ENCODE measurements at regions of chr15 and their contacts with region 1.

Region 1: GRCh38 chr15:90886041-90886614 is 1.8 kb downstream of the FES start:
- DNase-seq: peak; percentile 87
- ATAC-seq: peak; percentile 67
- H3K4me3 ChIP-seq: peak overlapping the region in 3 of 5 experiments; percentile 16 to 61 (median 51)
- H3K4me3 Mint-ChIP-seq: peak overlapping the region; percentile 80
- H3K27ac ChIP-seq: no peak overlapping the region
- H3K27ac Mint-ChIP-seq: peak overlapping the region; percentile 88
- H3K4me1 ChIP-seq: peaks cover 25 to 32% of the 10 kb centered on the region in 2 donors
- H3K4me1 Mint-ChIP-seq: peaks cover 22% of the 10 kb centered on the region
- H3K27me3 ChIP-seq: no peaks in the 10 kb centered on the region
- H3K27me3 Mint-ChIP-seq: no peaks in the 10 kb centered on the region
- CTCF ChIP-seq: peak; percentile 99

Region 2: GRCh38 chr15:89912674-89913396 is 973.3 kb before region 1 on chr15 and contains the start of gene ARPIN:
- CTCF ChIA-PET with region 1: no interaction called
- POLR2A ChIA-PET with region 1: no interaction called
- intact Hi-C with region 1: no loop called
- DNase-seq: peak; percentile 32
- ATAC-seq: no peak
- H3K4me3 ChIP-seq: peak within 1 kb of the TSS in 4 of 5 experiments; percentile 13 to 63 (median 49)
- H3K4me3 Mint-ChIP-seq: peak within 1 kb of the TSS; percentile 71
- H3K27ac ChIP-seq: no peak within 1 kb of the TSS
- H3K27ac Mint-ChIP-seq: no peak within 1 kb of the TSS
- H3K4me1 ChIP-seq: peaks cover 12 to 13% of the 10 kb centered on the region in 2 donors
- H3K4me1 Mint-ChIP-seq: peaks cover 16% of the 10 kb centered on the region
- H3K27me3 ChIP-seq: peaks cover 0 to 19% (median 17%) of the 10 kb centered on the region in 4 experiments
- H3K27me3 Mint-ChIP-seq: peaks cover 46% of the 10 kb centered on the region
- CTCF ChIP-seq: no peak
- total RNA-seq, gene ARPIN: 0.10 TPM in 1 of 2 replicates, not detected in the other

Region 3: DNA sequence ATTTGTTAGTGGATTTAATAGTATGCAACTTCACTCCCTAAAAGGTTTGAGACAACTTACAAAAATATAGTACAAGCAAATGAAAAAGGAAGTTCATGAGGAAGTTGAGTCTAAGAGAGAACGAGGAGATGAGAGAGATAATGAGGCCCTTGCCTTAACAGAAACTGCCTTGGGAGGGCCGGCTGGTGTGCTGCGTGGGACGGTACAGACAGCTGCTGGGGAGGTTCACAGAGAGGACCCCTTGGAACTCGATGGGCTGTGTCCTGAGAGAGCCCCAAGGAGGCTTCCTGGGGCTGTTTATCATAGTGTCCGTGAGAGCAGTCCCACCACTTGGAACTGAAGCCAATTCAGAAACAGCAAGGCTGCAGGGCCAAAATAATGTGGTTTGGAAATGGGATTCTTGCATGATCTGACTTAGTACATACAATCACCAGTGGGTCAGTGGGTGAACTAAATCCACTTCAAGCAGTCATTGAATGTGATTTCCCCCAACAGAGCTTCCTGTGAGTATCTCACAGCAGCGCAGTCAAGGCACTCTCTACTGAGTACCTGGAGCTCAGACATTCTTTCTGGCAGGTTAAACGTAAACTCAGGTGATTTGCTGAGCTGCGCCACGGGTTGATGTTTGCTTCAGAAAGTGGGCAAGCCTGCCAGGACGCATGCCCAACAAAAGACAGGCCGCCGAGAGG is 265.6 kb before region 1 on chr15:
- CTCF ChIA-PET with region 1: interaction called, 17 read pairs
- POLR2A ChIA-PET with region 1: no interaction called
- intact Hi-C with region 1: no loop called
- DNase-seq: peak; percentile 58
- ATAC-seq: peak; percentile 77
- H3K4me3 ChIP-seq: peak overlapping the region in 1 of 5 experiments; percentile 12
- H3K4me3 Mint-ChIP-seq: peak overlapping the region; percentile 8
- H3K27ac ChIP-seq: peak overlapping the region; percentile 39 to 64
- H3K27ac Mint-ChIP-seq: peak overlapping the region; percentile 80
- H3K4me1 ChIP-seq: peaks cover 15 to 19% of the 10 kb centered on the region in 2 donors
- H3K4me1 Mint-ChIP-seq: peaks cover 17% of the 10 kb centered on the region
- H3K27me3 ChIP-seq: no peaks in the 10 kb centered on the region
- H3K27me3 Mint-ChIP-seq: no peaks in the 10 kb centered on the region
- CTCF ChIP-seq: no peak

Region 4: DNA sequence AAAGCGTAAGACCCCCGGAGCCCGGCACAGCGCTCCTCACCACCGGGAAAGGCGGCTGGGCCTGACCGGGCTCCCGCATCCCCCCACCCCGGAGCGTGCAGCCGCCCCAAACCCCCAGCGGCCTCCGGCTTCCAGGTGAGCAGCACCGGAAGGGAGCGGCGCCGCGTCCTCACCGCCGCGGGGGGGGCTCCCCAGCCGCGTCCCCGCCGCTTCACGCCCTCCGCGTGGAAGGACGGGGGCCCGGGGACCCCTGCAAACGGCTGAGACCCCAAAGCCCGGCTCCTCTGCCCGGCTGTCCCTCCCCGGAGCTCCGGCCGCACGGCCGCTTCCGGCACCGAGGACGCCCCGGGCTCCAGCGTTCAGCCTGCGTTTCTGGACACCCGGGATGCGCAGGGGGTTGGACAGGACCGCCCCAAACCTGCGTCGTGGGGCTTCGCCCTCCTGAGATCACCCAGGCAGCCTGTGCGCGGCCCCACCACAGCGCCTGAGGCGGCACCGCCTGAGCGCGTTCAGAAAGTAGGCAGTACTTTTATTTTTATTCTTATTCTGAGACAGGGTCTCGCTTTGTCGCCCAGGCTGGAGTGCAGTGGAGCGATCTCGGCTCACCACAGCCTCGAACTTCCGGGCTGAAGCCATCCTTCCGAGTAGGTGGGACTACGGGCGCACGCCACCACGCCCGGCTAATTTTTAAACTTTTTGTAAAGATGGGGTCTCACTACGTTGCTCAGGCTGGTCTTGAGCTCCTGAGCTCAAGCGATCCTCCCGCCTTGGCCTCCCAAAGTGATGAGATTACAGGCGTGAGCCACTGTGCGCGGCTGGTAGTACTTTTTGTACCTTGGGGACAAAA is 220.6 kb before region 1 on chr15:
- CTCF ChIA-PET with region 1: interaction called, 11 read pairs
- POLR2A ChIA-PET with region 1: no interaction called
- intact Hi-C with region 1: loop called (anchors 5 kb)
- DNase-seq: peak; percentile 83
- ATAC-seq: peak; percentile 73
- H3K4me3 ChIP-seq: peak overlapping the region in 4 of 5 experiments; percentile 50 to 82 (median 62)
- H3K4me3 Mint-ChIP-seq: peak overlapping the region; percentile 89
- H3K27ac ChIP-seq: peak overlapping the region; percentile 20 to 57
- H3K27ac Mint-ChIP-seq: peak overlapping the region; percentile 78
- H3K4me1 ChIP-seq: peaks cover 54 to 65% of the 10 kb centered on the region in 2 donors
- H3K4me1 Mint-ChIP-seq: peaks cover 56% of the 10 kb centered on the region
- H3K27me3 ChIP-seq: peaks cover 0 to 17% (median 11%) of the 10 kb centered on the region in 4 experiments
- H3K27me3 Mint-ChIP-seq: peaks cover 13% of the 10 kb centered on the region
- CTCF ChIP-seq: no peak

Region 5: DNA sequence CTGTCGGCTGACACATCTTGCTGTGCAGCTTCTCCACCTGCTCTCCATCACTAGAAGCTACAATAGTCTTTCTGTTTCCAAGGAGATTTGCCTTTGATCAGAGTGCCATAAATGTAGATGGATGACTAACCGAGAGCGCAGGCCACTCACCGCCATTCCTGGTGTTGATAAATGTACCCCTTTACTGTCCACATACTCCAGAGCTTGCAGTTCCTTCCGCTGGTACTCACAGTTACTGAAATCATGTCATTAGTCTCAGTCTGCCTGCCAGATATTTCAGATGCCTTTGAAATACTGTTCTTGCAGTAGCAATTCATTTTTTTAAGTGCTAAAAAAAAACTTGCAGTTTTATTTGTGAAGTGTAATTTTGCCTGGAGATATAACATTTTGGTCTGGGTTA is 96.7 kb before region 1 on chr15:
- CTCF ChIA-PET with region 1: interaction called, 29 read pairs
- POLR2A ChIA-PET with region 1: interaction called, 3 read pairs
- intact Hi-C with region 1: no loop called
- DNase-seq: no peak
- ATAC-seq: no peak
- H3K4me3 ChIP-seq: no peak overlapping the region
- H3K4me3 Mint-ChIP-seq: no peak overlapping the region
- H3K27ac ChIP-seq: no peak overlapping the region
- H3K27ac Mint-ChIP-seq: no peak overlapping the region
- H3K4me1 ChIP-seq: peaks cover 0 to 18% of the 10 kb centered on the region in 2 donors
- H3K4me1 Mint-ChIP-seq: peaks cover 20% of the 10 kb centered on the region
- H3K27me3 ChIP-seq: no peaks in the 10 kb centered on the region
- H3K27me3 Mint-ChIP-seq: no peaks in the 10 kb centered on the region
- CTCF ChIP-seq: no peak

Region 6: DNA sequence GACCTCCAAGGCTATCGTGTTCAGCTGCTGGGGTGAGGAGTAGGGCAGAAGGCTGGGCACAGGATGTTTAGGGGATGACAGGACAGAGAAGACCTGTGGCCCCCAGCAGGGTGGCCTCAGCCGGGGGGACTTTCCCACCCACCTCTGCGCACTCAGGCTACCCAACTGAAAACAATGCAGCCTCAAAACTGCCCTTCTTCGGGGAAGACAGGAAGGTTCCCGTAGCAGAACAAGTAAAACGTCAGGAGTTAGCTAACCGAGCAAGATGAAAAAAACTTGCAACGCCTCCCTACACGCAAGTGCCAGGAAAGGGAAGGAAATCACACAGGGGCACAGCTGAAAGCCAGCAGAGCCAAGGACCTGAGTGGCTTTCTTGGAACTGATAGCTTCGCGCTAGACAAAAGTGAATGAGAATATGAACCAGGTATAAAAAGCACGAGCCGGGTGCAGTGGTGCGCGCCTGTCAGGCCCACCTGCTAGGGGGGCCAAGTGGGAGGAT is 56.1 kb before region 1 on chr15:
- CTCF ChIA-PET with region 1: interaction called, 11 read pairs
- POLR2A ChIA-PET with region 1: interaction called, 7 read pairs
- intact Hi-C with region 1: loop called (anchors 5 kb)
- DNase-seq: peak; percentile 53
- ATAC-seq: peak; percentile 70
- H3K4me3 ChIP-seq: peak overlapping the region in 1 of 5 experiments; percentile 6
- H3K4me3 Mint-ChIP-seq: peak overlapping the region; percentile 79
- H3K27ac ChIP-seq: no peak overlapping the region
- H3K27ac Mint-ChIP-seq: peak overlapping the region; percentile 10
- H3K4me1 ChIP-seq: peaks cover 14 to 16% of the 10 kb centered on the region in 2 donors
- H3K4me1 Mint-ChIP-seq: peaks cover 18% of the 10 kb centered on the region
- H3K27me3 ChIP-seq: no peaks in the 10 kb centered on the region
- H3K27me3 Mint-ChIP-seq: peaks cover 3% of the 10 kb centered on the region
- CTCF ChIP-seq: no peak

Region 7: DNA sequence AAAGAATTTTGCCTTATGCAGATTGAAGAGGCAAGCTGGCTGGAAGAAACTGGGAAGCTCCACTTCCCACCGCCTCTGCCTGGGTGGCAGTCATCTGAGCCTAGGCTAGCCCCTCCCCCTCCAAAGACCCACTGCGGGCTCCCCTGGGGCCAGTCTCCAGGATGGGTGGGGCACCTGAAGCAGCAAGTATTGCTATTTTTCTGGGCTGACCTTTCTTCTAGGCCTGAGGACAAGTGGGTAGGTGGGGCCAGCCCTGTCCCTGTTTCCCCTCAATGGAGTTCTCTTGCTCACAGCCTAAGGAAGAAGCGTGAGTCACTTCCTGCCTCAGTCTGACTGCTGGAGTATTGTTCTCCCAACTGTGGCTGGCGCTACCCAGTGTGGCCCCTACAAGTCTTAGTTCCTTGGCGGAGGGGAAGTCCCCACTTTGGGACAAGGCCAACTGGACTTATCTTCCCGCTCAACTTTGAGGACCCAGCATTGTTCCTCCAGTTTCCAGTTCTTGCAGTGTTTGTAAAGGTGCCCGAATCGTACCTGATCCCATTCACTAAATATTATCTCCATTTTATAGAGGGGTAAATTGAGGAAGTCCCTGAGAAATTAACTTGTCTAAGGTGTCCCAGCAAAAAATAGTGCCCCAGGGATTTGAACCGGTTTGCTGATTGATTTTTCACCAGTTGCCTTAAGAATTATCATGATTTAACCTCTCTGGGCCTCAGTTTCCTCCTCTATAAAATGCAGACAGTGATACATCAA is 16.4 kb before region 1 on chr15:
- CTCF ChIA-PET with region 1: interaction called, 11 read pairs
- POLR2A ChIA-PET with region 1: interaction called, 7 read pairs
- intact Hi-C with region 1: no loop called
- DNase-seq: peak; percentile 50
- ATAC-seq: peak; percentile 59
- H3K4me3 ChIP-seq: peak overlapping the region in 1 of 5 experiments; percentile 18
- H3K4me3 Mint-ChIP-seq: peak overlapping the region; percentile 92
- H3K27ac ChIP-seq: peak overlapping the region; percentile 19 to 32
- H3K27ac Mint-ChIP-seq: peak overlapping the region; percentile 95
- H3K4me1 ChIP-seq: peaks cover 31 to 39% of the 10 kb centered on the region in 2 donors
- H3K4me1 Mint-ChIP-seq: peaks cover 41% of the 10 kb centered on the region
- H3K27me3 ChIP-seq: no peaks in the 10 kb centered on the region
- H3K27me3 Mint-ChIP-seq: no peaks in the 10 kb centered on the region
- CTCF ChIP-seq: no peak

Region 8: DNA sequence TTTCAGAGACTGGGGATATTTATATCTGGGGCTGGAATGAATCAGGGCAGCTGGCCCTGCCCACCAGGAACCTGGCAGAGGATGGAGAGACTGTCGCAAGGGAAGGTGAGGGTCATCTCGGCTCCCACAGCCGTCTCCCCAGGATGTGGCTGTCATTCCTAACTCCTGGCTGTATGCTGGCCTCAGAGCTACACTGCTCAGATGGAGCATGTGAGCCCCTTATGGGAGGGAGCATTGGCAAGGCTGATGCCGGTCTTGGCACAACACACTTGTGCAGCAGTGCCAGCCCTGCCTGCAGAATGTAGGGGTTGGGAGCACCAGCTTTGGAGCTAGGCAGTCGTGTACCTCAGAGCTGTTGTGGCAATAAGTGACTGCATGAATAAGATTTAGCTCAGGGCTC is 73.8 kb after region 1 on chr15:
- CTCF ChIA-PET with region 1: no interaction called
- POLR2A ChIA-PET with region 1: no interaction called
- intact Hi-C with region 1: no loop called
- DNase-seq: no peak
- ATAC-seq: no peak
- H3K4me3 ChIP-seq: no peak overlapping the region
- H3K4me3 Mint-ChIP-seq: no peak overlapping the region
- H3K27ac ChIP-seq: no peak overlapping the region
- H3K27ac Mint-ChIP-seq: no peak overlapping the region
- H3K4me1 ChIP-seq: peaks cover 13 to 18% of the 10 kb centered on the region in 2 donors
- H3K4me1 Mint-ChIP-seq: peaks cover 15% of the 10 kb centered on the region
- H3K27me3 ChIP-seq: no peaks in the 10 kb centered on the region
- H3K27me3 Mint-ChIP-seq: no peaks in the 10 kb centered on the region
- CTCF ChIP-seq: no peak

Region 9: GRCh38 chr15:90994417-90995311 is 108.5 kb after region 1 on chr15 and contains the start of gene PRC1:
- CTCF ChIA-PET with region 1: no interaction called
- POLR2A ChIA-PET with region 1: no interaction called
- intact Hi-C with region 1: no loop called
- DNase-seq: peak; percentile 97
- ATAC-seq: peak; percentile 97
- H3K4me3 ChIP-seq: peak within 1 kb of the TSS; percentile 61 to 93 (median 85)
- H3K4me3 Mint-ChIP-seq: peak within 1 kb of the TSS; percentile 99
- H3K27ac ChIP-seq: peak within 1 kb of the TSS; percentile 81 to 90
- H3K27ac Mint-ChIP-seq: peak within 1 kb of the TSS; percentile 96
- H3K4me1 ChIP-seq: peaks cover 10 to 14% of the 10 kb centered on the region in 2 donors
- H3K4me1 Mint-ChIP-seq: peaks cover 20% of the 10 kb centered on the region
- H3K27me3 ChIP-seq: no peaks in the 10 kb centered on the region
- H3K27me3 Mint-ChIP-seq: no peaks in the 10 kb centered on the region
- CTCF ChIP-seq: no peak
- total RNA-seq, gene PRC1: 8.1 and 11.6 TPM in 2 replicates